B cell (primary cell): ENCODE measurements at regions of chr7 and their contacts with region 1.

Region 1: DNA sequence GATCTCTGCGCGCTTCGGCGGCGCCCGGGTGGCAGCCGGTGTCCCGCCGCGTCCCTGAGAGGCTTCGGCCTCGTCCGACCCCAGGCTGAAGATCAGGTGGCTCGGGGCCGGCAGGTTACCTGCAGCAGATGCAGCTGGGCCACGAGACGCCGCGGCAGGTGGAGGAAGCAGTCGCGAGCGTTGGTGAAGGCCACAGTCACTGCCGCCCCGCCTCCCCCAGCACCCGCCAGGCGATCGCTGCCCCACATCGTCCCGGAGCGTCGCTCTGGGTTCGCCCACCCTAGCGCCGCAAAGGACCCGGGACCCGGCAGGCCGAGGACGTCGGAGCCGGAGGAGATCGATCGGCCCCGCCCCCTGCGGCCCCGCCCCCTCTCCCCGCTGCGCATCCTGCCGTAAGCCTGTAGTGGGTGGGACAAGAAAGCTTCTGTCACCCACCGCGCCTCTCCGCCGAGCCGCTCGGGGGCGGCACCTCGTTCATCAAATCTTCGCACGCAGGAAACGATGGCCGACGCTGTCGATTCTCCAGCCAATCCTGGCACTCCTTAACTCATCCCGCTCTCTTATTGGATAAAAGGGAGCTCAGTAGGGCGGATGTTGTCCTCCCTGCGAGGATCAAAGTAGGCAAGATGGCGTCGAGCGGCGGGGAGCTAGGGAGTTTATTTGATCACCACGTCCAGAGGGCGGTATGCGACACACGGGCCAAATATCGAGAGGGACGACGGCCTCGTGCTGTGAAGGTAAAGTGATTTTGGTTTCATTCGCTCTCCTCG is at the starts of genes PEX1 and RBM48:
- DNase-seq: peak; percentile 98
- ATAC-seq: peak; percentile 91
- H3K4me3 ChIP-seq: peak within 1 kb of the TSS; percentile 81 to 99 (median 95)
- H3K4me3 Mint-ChIP-seq: peak within 1 kb of the TSS; percentile 88
- H3K27ac ChIP-seq: peak within 1 kb of the TSS; percentile 89 to 96
- H3K27ac Mint-ChIP-seq: peak within 1 kb of the TSS; percentile 95
- H3K4me1 ChIP-seq: peaks cover 14 to 19% of the 10 kb centered on the region in 2 donors
- H3K4me1 Mint-ChIP-seq: peaks cover 26% of the 10 kb centered on the region
- H3K27me3 ChIP-seq: no peaks in the 10 kb centered on the region
- H3K27me3 Mint-ChIP-seq: no peaks in the 10 kb centered on the region
- CTCF ChIP-seq: peak; percentile 31
- total RNA-seq, gene PEX1: 33.7 and 34.8 TPM in 2 replicates
- total RNA-seq, gene RBM48: 32.9 and 36.8 TPM in 2 replicates

Region 2: GRCh38 chr7:92134271-92135051 is 393.9 kb before region 1 on chr7 and contains the start of gene CYP51A1:
- CTCF ChIA-PET with region 1: interaction called, 4 read pairs
- POLR2A ChIA-PET with region 1: interaction called, 4 read pairs
- intact Hi-C with region 1: loop called (anchors 1 kb)
- DNase-seq: peak; percentile 99
- ATAC-seq: peak; percentile 84
- H3K4me3 ChIP-seq: peak within 1 kb of the TSS; percentile 86 to 94 (median 90)
- H3K4me3 Mint-ChIP-seq: peak within 1 kb of the TSS; percentile 99
- H3K27ac ChIP-seq: peak within 1 kb of the TSS; percentile 94 to 98
- H3K27ac Mint-ChIP-seq: peak within 1 kb of the TSS; percentile 100
- H3K4me1 ChIP-seq: peaks cover 18 to 27% of the 10 kb centered on the region in 2 donors
- H3K4me1 Mint-ChIP-seq: peaks cover 39% of the 10 kb centered on the region
- H3K27me3 ChIP-seq: no peaks in the 10 kb centered on the region
- H3K27me3 Mint-ChIP-seq: no peaks in the 10 kb centered on the region
- CTCF ChIP-seq: no peak
- total RNA-seq, gene CYP51A1: 36.1 and 37.9 TPM in 2 replicates

Region 3: GRCh38 chr7:92245487-92246362 is 282.6 kb before region 1 on chr7 and contains the starts of genes ANKIB1 and KRIT1:
- CTCF ChIA-PET with region 1: interaction called, 3 read pairs
- POLR2A ChIA-PET with region 1: interaction called, 10 read pairs
- intact Hi-C with region 1: loop called (anchors 2 kb)
- DNase-seq: peak; percentile 92
- ATAC-seq: peak; percentile 78
- H3K4me3 ChIP-seq: peak within 1 kb of the TSS; percentile 55 to 83 (median 81)
- H3K4me3 Mint-ChIP-seq: peak within 1 kb of the TSS; percentile 99
- H3K27ac ChIP-seq: peak within 1 kb of the TSS; percentile 84 to 97
- H3K27ac Mint-ChIP-seq: peak within 1 kb of the TSS; percentile 99
- H3K4me1 ChIP-seq: peaks cover 15 to 31% of the 10 kb centered on the region in 2 donors
- H3K4me1 Mint-ChIP-seq: peaks cover 39% of the 10 kb centered on the region
- H3K27me3 ChIP-seq: no peaks in the 10 kb centered on the region
- H3K27me3 Mint-ChIP-seq: no peaks in the 10 kb centered on the region
- CTCF ChIP-seq: peak; percentile 20
- total RNA-seq, gene ANKIB1: 76.7 and 77.5 TPM in 2 replicates
- total RNA-seq, gene KRIT1: 78.1 and 85.1 TPM in 2 replicates

Region 4: DNA sequence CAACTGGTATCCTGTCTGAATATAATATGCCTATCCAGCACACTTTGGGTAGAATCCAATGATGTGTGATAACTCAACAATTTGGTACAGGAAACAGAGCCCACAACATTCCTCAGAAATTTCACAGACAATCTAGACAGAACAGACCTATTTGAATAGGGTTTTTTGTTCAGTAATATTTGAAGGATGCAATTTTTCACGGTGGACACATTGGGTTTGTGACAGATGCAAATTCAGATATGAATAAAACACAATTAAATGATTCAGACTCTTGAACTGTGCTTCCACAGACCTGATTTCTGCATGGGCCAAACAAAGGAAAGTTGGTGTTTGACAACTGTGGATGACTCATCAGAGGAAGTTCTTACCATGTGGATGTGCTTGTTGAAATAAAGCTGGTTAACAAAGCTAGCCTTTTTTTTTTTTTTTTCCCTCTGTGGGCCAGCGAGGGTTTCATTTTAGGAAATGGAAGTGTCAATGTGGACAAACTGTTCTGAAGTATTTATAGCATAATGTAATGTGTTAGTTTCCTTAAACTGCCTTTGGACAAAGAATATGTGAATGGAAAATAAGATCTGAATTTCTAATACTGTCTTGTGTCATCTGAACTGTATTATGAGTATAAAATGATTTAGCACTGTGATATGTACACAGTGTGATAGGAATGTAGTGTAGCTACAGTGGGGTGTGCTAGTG is 105.0 kb after region 1 on chr7:
- CTCF ChIA-PET with region 1: no interaction called
- POLR2A ChIA-PET with region 1: no interaction called
- intact Hi-C with region 1: no loop called
- DNase-seq: no peak
- ATAC-seq: peak; percentile 49
- H3K4me3 ChIP-seq: no peak overlapping the region
- H3K4me3 Mint-ChIP-seq: no peak overlapping the region
- H3K27ac ChIP-seq: no peak overlapping the region
- H3K27ac Mint-ChIP-seq: no peak overlapping the region
- H3K4me1 ChIP-seq: peaks cover 6 to 7% of the 10 kb centered on the region in 2 donors
- H3K4me1 Mint-ChIP-seq: peaks cover 29% of the 10 kb centered on the region
- H3K27me3 ChIP-seq: no peaks in the 10 kb centered on the region
- H3K27me3 Mint-ChIP-seq: no peaks in the 10 kb centered on the region
- CTCF ChIP-seq: no peak